ENCODE measurements at regions of chr4 and their contacts with region 1.

Region 1: DNA sequence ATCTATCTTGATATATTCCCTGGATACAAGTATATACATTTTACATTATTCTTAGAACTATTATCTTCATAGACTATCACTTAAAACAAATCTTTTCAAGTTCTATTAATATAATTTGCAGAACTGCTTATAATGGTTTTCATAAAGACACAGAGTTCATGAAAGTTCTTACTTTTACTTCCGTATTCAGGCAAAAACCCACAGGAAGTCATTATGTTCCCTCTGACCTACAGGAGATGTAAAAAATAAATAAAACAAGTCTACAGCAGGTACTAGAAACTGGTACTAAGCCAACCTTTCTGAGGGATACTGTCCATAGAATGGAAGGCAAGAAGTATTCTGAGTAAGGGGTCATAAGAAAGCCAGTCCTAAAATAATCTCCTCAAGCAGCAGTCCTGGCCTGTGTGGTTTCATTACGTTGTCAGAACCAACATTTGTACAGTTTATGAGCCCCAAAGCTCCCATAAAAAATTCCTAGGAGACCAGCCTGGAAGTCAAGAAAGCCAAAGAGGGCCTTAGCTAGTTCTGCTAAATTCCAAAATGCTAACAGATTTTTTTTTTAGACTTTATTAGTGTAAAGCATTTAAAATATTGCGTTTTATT is 68.6 kb downstream of the CAMK2D start:
- DNase-seq: peak in 2 of 9 donors; percentile 10 to 29
- ATAC-seq: peak; percentile 53
- H3K4me3 ChIP-seq: peak overlapping the region; percentile 43
- H3K4me3 Mint-ChIP-seq: peak overlapping the region in 8 of 10 donors; percentile 41 to 62 (median 51)
- H3K27ac ChIP-seq: no peak overlapping the region
- H3K27ac Mint-ChIP-seq: peak overlapping the region in 7 of 9 donors; percentile 36 to 87 (median 57)
- H3K4me1 ChIP-seq: peaks cover 8 to 9% of the 10 kb centered on the region in 2 donors
- H3K4me1 Mint-ChIP-seq: peaks cover 13 to 43% (median 31%) of the 10 kb centered on the region in 7 donors
- H3K27me3 ChIP-seq: no peaks in the 10 kb centered on the region
- H3K27me3 Mint-ChIP-seq: no peaks in the 10 kb centered on the region

Region 2: GRCh38 chr4:113708250-113708649 is 15.3 kb after region 1 on chr4:
- CTCF ChIA-PET with region 1: interaction called, 3 read pairs
- POLR2A ChIA-PET with region 1: no interaction called
- intact Hi-C with region 1: loop called in 1 of 2 experiments (anchors 2 kb)
- DNase-seq: no peak
- ATAC-seq: no peak
- H3K4me3 ChIP-seq: no peak overlapping the region
- H3K4me3 Mint-ChIP-seq: no peak overlapping the region
- H3K27ac ChIP-seq: no peak overlapping the region
- H3K27ac Mint-ChIP-seq: no peak overlapping the region
- H3K4me1 ChIP-seq: no peaks in the 10 kb centered on the region
- H3K4me1 Mint-ChIP-seq: peaks cover 9 to 50% (median 45%) of the 10 kb centered on the region in 7 donors
- H3K27me3 ChIP-seq: no peaks in the 10 kb centered on the region
- H3K27me3 Mint-ChIP-seq: no peaks in the 10 kb centered on the region

Region 3: DNA sequence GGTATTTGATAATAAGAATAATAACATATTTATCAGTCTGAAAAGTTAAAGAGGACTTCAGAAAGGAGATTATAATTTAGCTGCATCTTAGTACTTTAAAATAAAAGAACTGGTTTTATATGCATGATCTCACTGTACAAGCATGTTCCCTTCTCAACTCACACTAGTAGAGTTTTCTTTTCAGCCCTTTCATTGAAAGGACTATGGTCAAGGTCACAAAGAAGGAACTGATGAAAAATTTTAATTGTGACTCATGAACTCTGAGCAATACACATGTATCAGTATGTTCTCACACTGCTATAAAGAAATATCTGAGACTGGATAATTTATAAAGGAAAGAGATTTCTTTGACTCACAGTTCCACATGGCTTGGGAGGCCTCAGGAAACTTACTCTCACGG is 1494.2 kb after region 1 on chr4:
- CTCF ChIA-PET with region 1: no interaction called
- POLR2A ChIA-PET with region 1: no interaction called
- intact Hi-C with region 1: no loop called
- DNase-seq: no peak
- ATAC-seq: no peak
- H3K4me3 ChIP-seq: no peak overlapping the region
- H3K4me3 Mint-ChIP-seq: no peak overlapping the region
- H3K27ac ChIP-seq: no peak overlapping the region
- H3K27ac Mint-ChIP-seq: no peak overlapping the region
- H3K4me1 ChIP-seq: no peaks in the 10 kb centered on the region
- H3K4me1 Mint-ChIP-seq: no peaks in the 10 kb centered on the region
- H3K27me3 ChIP-seq: no peaks in the 10 kb centered on the region
- H3K27me3 Mint-ChIP-seq: no peaks in the 10 kb centered on the region